ENCODE measurements at regions of chr20 and their contacts with region 1.

Region 1: GRCh38 chr20:63645218-63645617 is 8.0 kb downstream of the STMN3 start:
- DNase-seq: peak in 1 of 3 donors; percentile 37
- ATAC-seq: no peak
- H3K4me3 ChIP-seq: no peak overlapping the region
- H3K4me1 ChIP-seq: peaks cover 4% of the 10 kb centered on the region
- CTCF ChIP-seq: no peak

Region 2: DNA sequence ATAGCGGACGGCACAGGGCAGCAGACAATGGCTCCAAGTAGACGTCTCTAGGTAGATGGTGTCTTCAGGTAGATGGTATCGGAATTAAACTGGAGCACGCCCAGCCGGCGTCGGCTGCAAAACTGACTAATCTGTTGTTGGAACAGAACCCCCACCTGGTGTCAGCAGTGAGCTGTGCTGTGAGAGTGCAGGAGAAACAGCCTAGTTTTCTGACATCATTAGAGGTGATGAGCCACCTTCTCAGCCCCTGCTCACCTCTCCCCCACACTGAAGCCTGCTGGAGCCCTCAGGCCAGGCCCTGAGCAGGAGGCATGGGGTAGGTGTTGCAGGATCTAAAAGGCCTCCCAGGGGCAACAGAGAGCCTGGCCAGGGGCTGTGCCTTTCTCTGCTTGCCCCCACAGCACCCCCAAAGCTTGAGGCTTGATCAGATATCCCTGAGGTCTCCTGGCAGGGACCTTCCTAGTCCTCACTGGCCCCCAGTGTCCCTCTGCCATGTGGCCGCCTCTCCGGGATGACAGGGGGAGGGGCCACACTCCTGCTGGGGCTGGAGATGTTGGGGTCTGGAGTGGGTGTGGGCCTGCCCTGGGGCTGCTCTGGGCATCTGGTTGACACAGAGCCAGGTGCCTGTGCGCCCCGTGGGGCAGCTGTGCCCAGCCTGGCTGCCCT is 64.3 kb before region 1 on chr20:
- intact Hi-C with region 1: no loop called
- DNase-seq: peak in 2 of 3 donors; percentile 42 to 63
- ATAC-seq: peak; percentile 69
- H3K4me3 ChIP-seq: no peak overlapping the region
- H3K4me1 ChIP-seq: no peaks in the 10 kb centered on the region
- CTCF ChIP-seq: no peak

Region 3: GRCh38 chr20:63858393-63859165 is 213.4 kb after region 1 on chr20:
- intact Hi-C with region 1: loop called in 1 of 2 experiments (anchors 5 kb)
- DNase-seq: no peak
- ATAC-seq: peak; percentile 2
- H3K4me3 ChIP-seq: no peak overlapping the region
- H3K4me1 ChIP-seq: peaks cover 22% of the 10 kb centered on the region
- CTCF ChIP-seq: no peak